ENCODE measurements at regions of chr12 and their contacts with region 1.

Region 1: GRCh38 chr12:92624236-92624635 is 78.6 kb upstream of the PLEKHG7 start:
- DNase-seq: no peak
- H3K4me3 ChIP-seq: no peak overlapping the region
- H3K27ac ChIP-seq: no peak overlapping the region
- H3K4me1 ChIP-seq: no peaks in the 10 kb centered on the region
- CTCF ChIP-seq: no peak

Region 2: GRCh38 chr12:90959538-90960139 is 1664.6 kb before region 1 on chr12:
- CTCF ChIA-PET with region 1: no interaction called
- POLR2A ChIA-PET with region 1: no interaction called
- intact Hi-C with region 1: loop called (anchors 5 kb)
- DNase-seq: peak; percentile 46
- H3K4me3 ChIP-seq: no peak overlapping the region
- H3K27ac ChIP-seq: no peak overlapping the region
- H3K4me1 ChIP-seq: no peaks in the 10 kb centered on the region
- CTCF ChIP-seq: peak; percentile 83

Region 3: GRCh38 chr12:92844151-92844763 is 220.0 kb after region 1 on chr12:
- CTCF ChIA-PET with region 1: no interaction called
- POLR2A ChIA-PET with region 1: no interaction called
- intact Hi-C with region 1: no loop called
- DNase-seq: no peak
- H3K4me3 ChIP-seq: no peak overlapping the region
- H3K27ac ChIP-seq: no peak overlapping the region
- H3K4me1 ChIP-seq: no peaks in the 10 kb centered on the region
- CTCF ChIP-seq: no peak

Measured in OCI-LY7 (cell line).